ENCODE measurements at regions of chr18 and their contacts with region 1.

Region 1: DNA sequence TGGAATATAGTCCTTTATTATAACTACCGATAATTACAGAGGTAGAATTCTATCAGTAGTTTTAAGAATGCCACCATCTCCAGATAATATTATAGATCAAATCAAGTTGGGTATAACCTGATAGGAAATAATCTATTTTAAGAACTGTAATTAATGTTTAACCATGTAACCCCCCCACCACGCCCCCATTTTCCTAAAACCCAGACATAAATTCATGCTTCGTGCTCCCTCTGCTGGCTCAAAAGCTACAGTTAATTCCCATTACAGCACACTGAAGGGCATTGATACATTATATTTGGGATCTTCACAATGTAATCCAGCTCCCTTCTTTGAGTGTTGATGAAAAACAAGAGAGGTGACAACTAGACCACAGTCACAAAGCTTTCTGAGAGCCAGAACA is 228.0 kb upstream of the SMAD7 start:
- DNase-seq: no peak
- H3K4me3 Mint-ChIP-seq: no peak overlapping the region
- H3K27ac Mint-ChIP-seq: no peak overlapping the region
- H3K4me1 Mint-ChIP-seq: peaks cover 13% of the 10 kb centered on the region
- H3K27me3 Mint-ChIP-seq: no peaks in the 10 kb centered on the region

Region 2: DNA sequence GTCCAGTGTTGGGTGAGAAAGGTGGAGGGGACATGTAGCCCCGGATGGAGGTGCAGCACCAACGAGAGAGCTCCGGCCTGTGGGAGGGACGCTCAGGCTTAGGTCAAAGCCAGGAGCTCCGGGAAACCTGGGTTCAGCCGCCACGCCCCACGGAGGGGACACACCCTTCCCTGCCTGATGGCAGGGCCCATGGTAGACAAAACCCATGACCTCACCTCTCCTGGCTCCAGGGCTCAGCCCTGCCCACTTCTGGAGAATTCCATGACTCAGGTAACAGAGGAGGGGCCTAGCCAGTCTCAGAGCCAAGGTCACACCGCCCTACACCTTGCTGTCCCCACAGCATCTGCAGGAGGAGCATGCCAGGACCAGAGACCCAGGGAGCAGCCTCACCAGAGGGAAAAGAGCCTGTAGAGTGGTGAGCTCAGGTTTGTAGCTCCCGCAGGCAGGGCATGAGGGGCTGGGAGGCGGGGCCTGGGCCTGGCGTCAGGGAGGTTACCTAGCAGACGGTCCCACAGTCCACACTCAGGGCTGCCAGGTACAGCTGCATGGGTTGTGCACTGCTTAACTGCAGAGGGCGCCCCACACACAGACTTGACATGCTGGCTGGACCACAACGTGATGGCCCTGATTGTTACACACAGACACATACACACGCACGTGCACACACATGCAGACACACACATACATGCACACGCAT is 157.2 kb before region 1 on chr18:
- CTCF ChIA-PET with region 1: interaction called, 3 read pairs
- POLR2A ChIA-PET with region 1: no interaction called
- intact Hi-C with region 1: loop called (anchors 2 kb)
- DNase-seq: peak; percentile 76
- H3K4me3 Mint-ChIP-seq: no peak overlapping the region
- H3K27ac Mint-ChIP-seq: no peak overlapping the region
- H3K4me1 Mint-ChIP-seq: no peaks in the 10 kb centered on the region
- H3K27me3 Mint-ChIP-seq: no peaks in the 10 kb centered on the region

Region 3: GRCh38 chr18:49161627-49162026 is 17.1 kb before region 1 on chr18:
- CTCF ChIA-PET with region 1: interaction called, 4 read pairs
- POLR2A ChIA-PET with region 1: interaction called, 4 read pairs
- intact Hi-C with region 1: loop called (anchors 1 kb)
- DNase-seq: peak; percentile 63
- H3K4me3 Mint-ChIP-seq: no peak overlapping the region
- H3K27ac Mint-ChIP-seq: no peak overlapping the region
- H3K4me1 Mint-ChIP-seq: peaks cover 11% of the 10 kb centered on the region
- H3K27me3 Mint-ChIP-seq: no peaks in the 10 kb centered on the region

Region 4: GRCh38 chr18:49447810-49448745 is 269.3 kb after region 1 on chr18:
- CTCF ChIA-PET with region 1: no interaction called
- POLR2A ChIA-PET with region 1: no interaction called
- intact Hi-C with region 1: loop called (anchors 10 kb)
- DNase-seq: peak; percentile 42
- H3K4me3 Mint-ChIP-seq: no peak overlapping the region
- H3K27ac Mint-ChIP-seq: no peak overlapping the region
- H3K4me1 Mint-ChIP-seq: peaks cover 14% of the 10 kb centered on the region
- H3K27me3 Mint-ChIP-seq: no peaks in the 10 kb centered on the region